H1 (cell line): ENCODE measurements at regions of chrX and their contacts with region 1.

Region 1: GRCh38 chrX:47217642-47218279 is 720 bp upstream of the CDK16 start:
- DNase-seq: peak; percentile 90 to 91
- H3K4me3 ChIP-seq: peak overlapping the region; percentile 88 to 98 (median 94)
- H3K27ac ChIP-seq: peak overlapping the region; percentile 100
- H3K4me1 ChIP-seq: peaks cover 0 to 8% (median 3%) of the 10 kb centered on the region in 4 experiments; a peak in 6 of 7 replicates
- H3K27me3 ChIP-seq: no peaks in the 10 kb centered on the region
- CTCF ChIP-seq: no peak
- EP300 ChIP-seq: no peak
- POLR2A ChIP-seq: peak in 1 of 2 experiments; percentile 72; a peak in 2 of 3 replicates
- RAD21 ChIP-seq: no peak

Region 2: GRCh38 chrX:47190445-47191269 is 27.1 kb before region 1 on chrX:
- CTCF ChIA-PET with region 1: no interaction called
- POLR2A ChIA-PET with region 1: interaction called, 11 read pairs
- DNase-seq: peak; percentile 57 to 77
- H3K4me3 ChIP-seq: peak overlapping the region; percentile 40 to 86 (median 54)
- H3K27ac ChIP-seq: no peak overlapping the region
- H3K4me1 ChIP-seq: peaks cover 0 to 11% (median 5%) of the 10 kb centered on the region in 4 experiments; a peak in 6 of 7 replicates
- H3K27me3 ChIP-seq: no peaks in the 10 kb centered on the region
- CTCF ChIP-seq: no peak
- EP300 ChIP-seq: peak in 1 of 2 experiments; percentile 99; a peak in 2 of 3 replicates
- POLR2A ChIP-seq: peak in 1 of 2 experiments; percentile 67; a peak in 2 of 3 replicates
- RAD21 ChIP-seq: no peak

Region 3: DNA sequence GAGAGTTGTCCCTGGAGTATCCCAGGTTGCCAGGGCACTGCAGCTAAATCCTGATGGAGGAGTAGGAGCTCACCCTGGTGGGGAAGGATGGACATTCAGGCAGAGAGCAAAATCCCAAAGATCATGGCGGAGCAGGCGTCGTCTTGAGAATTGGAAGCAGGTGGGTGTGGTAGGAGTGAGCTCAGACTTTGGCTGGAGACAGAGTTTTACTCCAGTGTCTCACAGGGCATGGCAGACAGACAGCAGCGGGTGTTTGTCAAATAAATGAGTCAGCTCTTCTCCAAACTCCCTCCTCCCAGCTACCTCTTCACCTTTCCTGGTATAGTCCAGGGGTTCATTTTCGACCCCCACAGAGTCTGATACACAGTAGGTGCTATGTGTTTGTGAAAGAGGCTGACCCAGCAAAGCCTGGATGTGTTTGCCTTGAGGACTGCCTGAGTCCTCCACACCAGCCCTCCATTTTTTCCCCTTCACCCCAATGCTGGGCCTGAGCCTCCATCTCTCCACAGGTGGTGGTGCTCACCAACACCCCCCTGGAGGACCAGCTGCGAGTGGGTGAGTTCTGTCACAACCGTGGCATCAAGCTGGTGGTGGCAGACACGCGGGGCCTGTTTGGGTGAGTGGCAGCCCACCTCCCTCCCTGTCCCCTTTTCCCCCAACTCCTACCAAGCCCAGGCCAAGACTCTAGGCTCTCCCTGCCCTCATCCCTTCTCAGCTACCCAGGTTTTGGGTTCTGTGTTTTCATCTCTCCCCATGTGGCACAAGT is 17.2 kb before region 1 on chrX:
- CTCF ChIA-PET with region 1: interaction called, 7 read pairs
- POLR2A ChIA-PET with region 1: interaction called, 63 read pairs
- DNase-seq: no peak
- H3K4me3 ChIP-seq: no peak overlapping the region
- H3K27ac ChIP-seq: no peak overlapping the region
- H3K4me1 ChIP-seq: peaks cover 0 to 9% (median 6%) of the 10 kb centered on the region in 4 experiments; a peak in 5 of 7 replicates
- H3K27me3 ChIP-seq: no peaks in the 10 kb centered on the region
- CTCF ChIP-seq: no peak
- EP300 ChIP-seq: no peak
- POLR2A ChIP-seq: no peak
- RAD21 ChIP-seq: no peak; a peak in 1 of 4 replicates

Region 4: GRCh38 chrX:47233337-47234113 is 15.8 kb after region 1 on chrX:
- CTCF ChIA-PET with region 1: interaction called, 3 read pairs
- POLR2A ChIA-PET with region 1: interaction called, 16 read pairs
- DNase-seq: peak; percentile 79 to 82
- H3K4me3 ChIP-seq: peak overlapping the region; percentile 63 to 88 (median 72)
- H3K27ac ChIP-seq: peak overlapping the region; percentile 95
- H3K4me1 ChIP-seq: peaks cover 0 to 9% (median 5%) of the 10 kb centered on the region in 4 experiments; a peak in 4 of 7 replicates
- H3K27me3 ChIP-seq: no peaks in the 10 kb centered on the region
- CTCF ChIP-seq: no peak
- EP300 ChIP-seq: peak in 1 of 2 experiments; percentile 83; a peak in 1 of 3 replicates
- POLR2A ChIP-seq: peak; percentile 31 to 85
- RAD21 ChIP-seq: no peak

Region 5: GRCh38 chrX:47456080-47456479 is 238.3 kb after region 1 on chrX:
- CTCF ChIA-PET with region 1: no interaction called
- POLR2A ChIA-PET with region 1: no interaction called
- DNase-seq: no peak
- H3K4me3 ChIP-seq: no peak overlapping the region
- H3K27ac ChIP-seq: no peak overlapping the region
- H3K4me1 ChIP-seq: no peaks in the 10 kb centered on the region; a peak in 1 of 7 replicates
- H3K27me3 ChIP-seq: no peaks in the 10 kb centered on the region
- CTCF ChIP-seq: no peak
- EP300 ChIP-seq: no peak
- POLR2A ChIP-seq: no peak
- RAD21 ChIP-seq: no peak